ENCODE measurements at regions of chr19 and their contacts with region 1.

Region 1: GRCh38 chr19:39070888-39071287 is 13.3 kb upstream of the ACP7 start:
- DNase-seq: no peak
- ATAC-seq: no peak
- H3K4me3 ChIP-seq: no peak overlapping the region
- H3K4me3 Mint-ChIP-seq: no peak overlapping the region
- H3K27ac ChIP-seq: no peak overlapping the region
- H3K27ac Mint-ChIP-seq: peak overlapping the region; percentile 60
- H3K4me1 ChIP-seq: peaks cover 20% of the 10 kb centered on the region
- H3K4me1 Mint-ChIP-seq: peaks cover 23% of the 10 kb centered on the region
- H3K27me3 ChIP-seq: no peaks in the 10 kb centered on the region
- H3K27me3 Mint-ChIP-seq: peaks cover 3% of the 10 kb centered on the region
- CTCF ChIP-seq: no peak

Region 2: GRCh38 chr19:38964738-38965137 is 106.2 kb before region 1 on chr19:
- CTCF ChIA-PET with region 1: no interaction called
- POLR2A ChIA-PET with region 1: no interaction called
- intact Hi-C with region 1: no loop called
- DNase-seq: no peak
- ATAC-seq: no peak
- H3K4me3 ChIP-seq: no peak overlapping the region
- H3K4me3 Mint-ChIP-seq: no peak overlapping the region
- H3K27ac ChIP-seq: no peak overlapping the region
- H3K27ac Mint-ChIP-seq: no peak overlapping the region
- H3K4me1 ChIP-seq: peaks cover 4% of the 10 kb centered on the region
- H3K4me1 Mint-ChIP-seq: peaks cover 5% of the 10 kb centered on the region
- H3K27me3 ChIP-seq: no peaks in the 10 kb centered on the region
- H3K27me3 Mint-ChIP-seq: peaks cover 17% of the 10 kb centered on the region
- CTCF ChIP-seq: no peak

Region 3: GRCh38 chr19:39083983-39084731 is 13.3 kb after region 1 on chr19 and contains the start of gene ACP7:
- CTCF ChIA-PET with region 1: interaction called, 4 read pairs
- POLR2A ChIA-PET with region 1: interaction called, 12 read pairs
- intact Hi-C with region 1: loop called in 1 of 2 experiments (anchors 1 kb)
- DNase-seq: peak in 7 of 9 experiments; percentile 19 to 65 (median 39)
- ATAC-seq: peak; percentile 63
- H3K4me3 ChIP-seq: peak within 1 kb of the TSS; percentile 42 to 46
- H3K4me3 Mint-ChIP-seq: peak within 1 kb of the TSS; percentile 79
- H3K27ac ChIP-seq: no peak within 1 kb of the TSS
- H3K27ac Mint-ChIP-seq: no peak within 1 kb of the TSS
- H3K4me1 ChIP-seq: peaks cover 10% of the 10 kb centered on the region
- H3K4me1 Mint-ChIP-seq: peaks cover 15% of the 10 kb centered on the region
- H3K27me3 ChIP-seq: peaks cover 6 to 13% of the 10 kb centered on the region in 2 experiments
- H3K27me3 Mint-ChIP-seq: peaks cover 36% of the 10 kb centered on the region
- CTCF ChIP-seq: no peak
- total RNA-seq, gene ACP7: not detected

Region 4: DNA sequence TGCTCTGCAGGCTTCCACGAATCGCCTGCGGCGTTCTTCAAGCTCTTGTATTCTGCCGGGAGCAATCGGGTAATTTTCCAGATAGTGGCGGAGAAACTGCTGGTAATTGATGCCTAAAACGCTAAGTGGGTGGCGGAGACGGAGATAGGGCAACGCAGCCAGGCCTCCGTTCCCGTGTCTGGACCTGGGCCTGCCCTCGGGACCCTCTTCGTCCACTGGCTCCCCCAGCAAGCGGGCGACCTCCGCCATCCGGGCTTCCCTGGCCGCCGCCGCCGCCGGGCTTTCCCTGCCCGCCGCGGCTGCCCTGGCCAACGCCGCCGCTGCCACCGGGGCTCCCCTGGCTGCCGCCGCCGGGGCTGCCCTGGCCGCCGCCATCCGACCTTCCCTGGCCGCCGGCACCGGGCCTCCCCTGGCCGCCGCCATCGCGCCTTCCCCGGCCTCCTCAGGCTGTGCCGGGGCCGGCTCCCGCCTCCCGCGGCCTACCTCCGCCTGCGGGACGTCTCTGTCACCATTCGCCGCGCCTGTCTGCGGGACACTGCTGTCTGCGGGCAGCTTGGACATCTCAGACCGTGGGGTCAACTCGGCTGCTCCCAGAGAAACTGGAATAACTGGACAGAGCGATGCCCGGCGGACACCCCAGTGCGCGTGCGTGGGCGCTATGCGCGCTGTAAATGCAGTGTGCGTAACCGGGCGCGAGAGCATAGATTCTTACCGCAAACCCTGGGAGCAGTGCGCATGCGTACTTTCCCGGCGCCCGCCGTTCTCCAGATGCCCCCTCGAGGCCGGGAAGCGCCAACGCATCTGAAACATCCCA is 468.8 kb after region 1 on chr19 and contains the start of gene EID2:
- CTCF ChIA-PET with region 1: no interaction called
- POLR2A ChIA-PET with region 1: no interaction called
- intact Hi-C with region 1: loop called in 1 of 2 experiments (anchors 5 kb)
- DNase-seq: peak; percentile 84 to 97 (median 95)
- ATAC-seq: peak; percentile 91
- H3K4me3 ChIP-seq: peak within 1 kb of the TSS; percentile 81 to 95
- H3K4me3 Mint-ChIP-seq: peak within 1 kb of the TSS; percentile 97
- H3K27ac ChIP-seq: peak within 1 kb of the TSS; percentile 90 to 93
- H3K27ac Mint-ChIP-seq: peak within 1 kb of the TSS; percentile 98
- H3K4me1 ChIP-seq: peaks cover 31% of the 10 kb centered on the region
- H3K4me1 Mint-ChIP-seq: peaks cover 58% of the 10 kb centered on the region
- H3K27me3 ChIP-seq: no peaks in the 10 kb centered on the region
- H3K27me3 Mint-ChIP-seq: no peaks in the 10 kb centered on the region
- CTCF ChIP-seq: peak; percentile 74
- total RNA-seq, gene EID2: 16.3 to 17.7 TPM

Measured in CD8-positive, alpha-beta T cell (primary cell).